ENCODE measurements at regions of chr9 and their contacts with region 1.

Region 1: GRCh38 chr9:89684901-89685636 is 80.3 kb downstream of the GADD45G start:
- DNase-seq: peak; percentile 78 to 96
- H3K4me3 ChIP-seq: no peak overlapping the region
- H3K27ac ChIP-seq: peak overlapping the region; percentile 82 to 86
- H3K4me1 ChIP-seq: peaks cover 0 to 35% (median 23%) of the 10 kb centered on the region in 4 donors
- H3K27me3 ChIP-seq: no peaks in the 10 kb centered on the region
- CTCF ChIP-seq: peak; percentile 20 to 53

Region 2: DNA sequence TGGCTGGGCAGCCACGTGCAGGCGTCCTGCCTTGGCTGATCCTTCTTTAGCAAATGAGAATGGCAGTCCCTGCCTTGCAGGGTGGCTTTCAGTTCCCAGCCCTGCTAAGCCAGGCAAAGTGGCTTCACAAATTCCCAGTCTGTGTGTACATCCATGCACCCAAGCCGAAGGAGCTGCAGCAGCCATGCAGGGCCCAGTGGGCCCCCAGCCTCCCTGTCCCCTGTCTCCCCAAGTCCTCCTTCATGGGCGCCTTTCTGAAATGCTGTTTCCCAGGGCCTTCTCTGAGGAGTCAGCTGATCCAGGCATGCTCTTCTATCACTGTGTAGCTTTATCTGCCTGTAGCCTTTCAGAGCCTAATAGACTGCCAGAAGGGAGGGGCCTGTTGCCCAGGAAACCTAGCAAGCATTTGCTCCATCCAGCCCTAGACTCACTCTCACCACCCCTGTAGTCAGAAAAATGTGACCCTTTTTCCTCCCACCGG is 459.0 kb before region 1 on chr9:
- intact Hi-C with region 1: no loop called
- DNase-seq: no peak
- H3K4me3 ChIP-seq: no peak overlapping the region
- H3K27ac ChIP-seq: no peak overlapping the region
- H3K4me1 ChIP-seq: no peaks in the 10 kb centered on the region
- H3K27me3 ChIP-seq: no peaks in the 10 kb centered on the region
- CTCF ChIP-seq: no peak

Region 3: GRCh38 chr9:89318123-89319014 is 366.7 kb before region 1 on chr9 and contains the start of gene SECISBP2:
- intact Hi-C with region 1: loop called (anchors 5 kb)
- DNase-seq: peak; percentile 96 to 98
- H3K4me3 ChIP-seq: peak within 1 kb of the TSS; percentile 75 to 88
- H3K27ac ChIP-seq: peak within 1 kb of the TSS; percentile 97 to 100
- H3K4me1 ChIP-seq: peaks cover 0 to 39% (median 14%) of the 10 kb centered on the region in 4 donors
- H3K27me3 ChIP-seq: no peaks in the 10 kb centered on the region
- CTCF ChIP-seq: peak; percentile 61 to 65

Region 4: GRCh38 chr9:89978170-89978569 is 293.1 kb after region 1 on chr9:
- intact Hi-C with region 1: no loop called
- DNase-seq: no peak
- H3K4me3 ChIP-seq: no peak overlapping the region
- H3K27ac ChIP-seq: no peak overlapping the region
- H3K4me1 ChIP-seq: no peaks in the 10 kb centered on the region
- H3K27me3 ChIP-seq: no peaks in the 10 kb centered on the region
- CTCF ChIP-seq: peak; percentile 39 to 43

Measured in tibial artery (tissue), 4 donors.